Naive thymus-derived CD4-positive, alpha-beta T cell (primary cell): ENCODE measurements at regions of chr1 and their contacts with region 1.

Region 1: DNA sequence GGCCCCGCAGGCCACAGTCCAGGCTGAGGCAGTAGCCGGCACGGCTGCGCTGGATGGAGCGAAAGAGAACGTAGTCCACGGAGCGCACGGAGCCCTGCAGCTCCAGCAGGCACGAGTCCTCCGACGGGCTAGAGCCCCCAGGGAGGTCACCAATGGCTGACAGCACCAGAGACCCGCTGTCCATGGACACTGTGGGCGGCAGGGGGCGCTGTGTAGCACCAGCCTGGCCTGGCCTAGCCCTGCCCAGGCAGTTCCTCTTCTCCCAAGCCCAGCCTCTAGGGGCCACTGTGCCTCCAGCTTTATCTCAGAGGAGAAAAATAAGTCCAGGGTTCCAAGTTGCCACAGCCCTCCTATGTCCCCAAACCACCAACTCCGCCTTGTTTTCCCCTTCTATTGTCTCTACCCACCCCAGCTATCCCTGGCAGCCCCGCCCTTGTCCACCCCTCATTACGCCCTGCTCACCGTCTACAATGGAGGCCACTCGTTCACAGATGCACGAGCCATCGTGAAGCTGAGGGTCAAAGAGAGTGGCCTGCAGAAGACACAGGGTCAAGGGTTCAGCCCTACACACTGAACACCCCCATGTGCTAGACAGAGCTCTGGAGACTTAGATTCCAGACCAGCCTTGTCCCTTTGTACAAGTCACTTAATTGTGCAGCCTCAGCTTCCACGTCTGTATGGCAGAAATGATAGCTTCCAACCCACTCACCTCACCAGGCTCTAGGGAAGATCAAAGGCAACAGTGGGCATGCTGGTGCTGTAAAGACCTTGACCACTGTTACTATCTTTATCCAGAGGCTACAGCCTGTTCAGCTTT is 4.4 kb downstream of the ENTREP3 start:
- DNase-seq: peak; percentile 86 to 98 (median 93)
- ATAC-seq: peak; percentile 99
- H3K4me3 ChIP-seq: peak overlapping the region; percentile 54
- H3K4me3 Mint-ChIP-seq: peak overlapping the region in 9 of 10 donors; percentile 45 to 83 (median 62)
- H3K27ac ChIP-seq: peak overlapping the region; percentile 49
- H3K27ac Mint-ChIP-seq: peak overlapping the region in 7 of 9 donors; percentile 29 to 86 (median 69)
- H3K4me1 ChIP-seq: peaks cover 4 to 10% of the 10 kb centered on the region in 2 donors
- H3K4me1 Mint-ChIP-seq: peaks cover 21 to 36% (median 24%) of the 10 kb centered on the region in 7 donors
- H3K27me3 ChIP-seq: no peaks in the 10 kb centered on the region
- H3K27me3 Mint-ChIP-seq: no peaks in the 10 kb centered on the region

Region 2: GRCh38 chr1:155208541-155209311 is 42.1 kb before region 1 on chr1 and contains the start of gene MTX1:
- CTCF ChIA-PET with region 1: interaction called, 5 read pairs
- POLR2A ChIA-PET with region 1: interaction called, 5 read pairs
- intact Hi-C with region 1: loop called in 1 of 2 experiments (anchors 5 kb)
- DNase-seq: peak; percentile 83 to 91 (median 88)
- ATAC-seq: peak; percentile 89
- H3K4me3 ChIP-seq: peak within 1 kb of the TSS; percentile 100
- H3K4me3 Mint-ChIP-seq: peak within 1 kb of the TSS; percentile 81 to 92 (median 88)
- H3K27ac ChIP-seq: peak within 1 kb of the TSS; percentile 100
- H3K27ac Mint-ChIP-seq: peak within 1 kb of the TSS; percentile 92 to 99 (median 96)
- H3K4me1 ChIP-seq: peaks cover 20 to 21% of the 10 kb centered on the region in 2 donors
- H3K4me1 Mint-ChIP-seq: peaks cover 19 to 30% (median 24%) of the 10 kb centered on the region in 7 donors
- H3K27me3 ChIP-seq: no peaks in the 10 kb centered on the region
- H3K27me3 Mint-ChIP-seq: no peaks in the 10 kb centered on the region
- total RNA-seq, gene MTX1: 19.5 to 40.8 (median 22.0) TPM

Region 3: DNA sequence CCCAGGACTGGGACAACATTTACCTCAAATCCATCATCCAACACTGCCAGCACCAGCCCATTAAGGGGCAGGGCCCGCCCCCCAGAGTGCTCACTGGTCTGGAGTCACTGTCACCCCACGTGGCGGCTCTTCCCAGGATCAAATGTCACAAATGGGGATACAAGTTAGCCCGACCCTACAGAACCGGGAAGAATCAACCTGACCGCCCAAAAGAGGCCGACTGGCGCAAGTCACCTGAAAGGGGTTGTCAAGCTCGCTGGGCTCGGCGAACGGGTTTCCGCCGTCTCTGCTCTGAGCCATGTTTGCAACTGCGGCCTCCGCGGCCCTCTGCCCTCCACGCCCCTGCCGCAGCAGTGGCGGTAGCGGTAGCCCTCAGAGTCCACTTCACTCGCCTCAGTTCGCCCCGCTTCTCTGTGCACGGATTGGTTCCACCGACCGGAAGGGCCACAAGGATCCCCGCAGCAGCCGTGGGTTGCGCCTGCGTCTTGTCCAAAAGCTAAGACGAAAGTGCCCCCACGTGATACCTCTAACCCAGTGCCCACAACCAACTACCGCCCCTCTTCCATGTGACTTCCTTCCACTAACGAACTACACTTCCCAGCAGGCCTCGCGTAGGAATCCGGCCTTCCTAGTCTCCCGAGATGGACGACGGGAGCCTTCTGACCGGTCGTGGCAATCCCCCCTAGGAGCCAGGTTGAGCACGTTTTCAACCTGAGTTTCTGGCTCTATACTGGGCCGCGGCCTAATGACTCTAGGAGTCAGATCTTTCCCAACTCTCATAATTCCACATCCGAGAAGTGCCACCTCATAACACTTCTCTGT is 11.2 kb after region 1 on chr1 and contains the start of gene SCAMP3:
- CTCF ChIA-PET with region 1: interaction called, 42 read pairs
- POLR2A ChIA-PET with region 1: interaction called, 34 read pairs
- intact Hi-C with region 1: no loop called
- DNase-seq: peak; percentile 52 to 89 (median 79)
- ATAC-seq: peak; percentile 99
- H3K4me3 ChIP-seq: peak within 1 kb of the TSS; percentile 88
- H3K4me3 Mint-ChIP-seq: peak within 1 kb of the TSS; percentile 81 to 100 (median 98)
- H3K27ac ChIP-seq: peak within 1 kb of the TSS; percentile 87
- H3K27ac Mint-ChIP-seq: peak within 1 kb of the TSS; percentile 89 to 98 (median 96)
- H3K4me1 ChIP-seq: peaks cover 18 to 19% of the 10 kb centered on the region in 2 donors
- H3K4me1 Mint-ChIP-seq: peaks cover 22 to 42% (median 33%) of the 10 kb centered on the region in 7 donors
- H3K27me3 ChIP-seq: no peaks in the 10 kb centered on the region
- H3K27me3 Mint-ChIP-seq: no peaks in the 10 kb centered on the region
- total RNA-seq, gene SCAMP3: 50.8 to 118 (median 100) TPM

Region 4: GRCh38 chr1:155308493-155309422 is 57.9 kb after region 1 on chr1 and contains the start of gene FDPS:
- CTCF ChIA-PET with region 1: interaction called, 10 read pairs
- POLR2A ChIA-PET with region 1: interaction called, 3 read pairs
- intact Hi-C with region 1: loop called (anchors 1 kb)
- DNase-seq: peak; percentile 83 to 98 (median 95)
- ATAC-seq: peak; percentile 98
- H3K4me3 ChIP-seq: peak within 1 kb of the TSS; percentile 90
- H3K4me3 Mint-ChIP-seq: peak within 1 kb of the TSS; percentile 88 to 99 (median 97)
- H3K27ac ChIP-seq: peak within 1 kb of the TSS; percentile 87
- H3K27ac Mint-ChIP-seq: peak within 1 kb of the TSS; percentile 89 to 98 (median 96)
- H3K4me1 ChIP-seq: peaks cover 11 to 20% of the 10 kb centered on the region in 2 donors
- H3K4me1 Mint-ChIP-seq: peaks cover 12 to 43% (median 27%) of the 10 kb centered on the region in 7 donors
- H3K27me3 ChIP-seq: no peaks in the 10 kb centered on the region
- H3K27me3 Mint-ChIP-seq: no peaks in the 10 kb centered on the region
- total RNA-seq, gene FDPS: 58.5 to 193 (median 79.0) TPM

Region 5: GRCh38 chr1:155504207-155504606 is 253.4 kb after region 1 on chr1:
- CTCF ChIA-PET with region 1: interaction called, 5 read pairs
- POLR2A ChIA-PET with region 1: no interaction called
- intact Hi-C with region 1: loop called (anchors 2 to 10 kb)
- DNase-seq: peak in 2 of 9 donors; percentile 5 to 30
- ATAC-seq: peak; percentile 71
- H3K4me3 ChIP-seq: no peak overlapping the region
- H3K4me3 Mint-ChIP-seq: no peak overlapping the region
- H3K27ac ChIP-seq: no peak overlapping the region
- H3K27ac Mint-ChIP-seq: peak overlapping the region in 3 of 9 donors; percentile 10 to 32 (median 14)
- H3K4me1 ChIP-seq: peaks cover 0 to 18% of the 10 kb centered on the region in 2 donors
- H3K4me1 Mint-ChIP-seq: peaks cover 31 to 61% (median 50%) of the 10 kb centered on the region in 7 donors
- H3K27me3 ChIP-seq: no peaks in the 10 kb centered on the region
- H3K27me3 Mint-ChIP-seq: no peaks in the 10 kb centered on the region

Region 6: DNA sequence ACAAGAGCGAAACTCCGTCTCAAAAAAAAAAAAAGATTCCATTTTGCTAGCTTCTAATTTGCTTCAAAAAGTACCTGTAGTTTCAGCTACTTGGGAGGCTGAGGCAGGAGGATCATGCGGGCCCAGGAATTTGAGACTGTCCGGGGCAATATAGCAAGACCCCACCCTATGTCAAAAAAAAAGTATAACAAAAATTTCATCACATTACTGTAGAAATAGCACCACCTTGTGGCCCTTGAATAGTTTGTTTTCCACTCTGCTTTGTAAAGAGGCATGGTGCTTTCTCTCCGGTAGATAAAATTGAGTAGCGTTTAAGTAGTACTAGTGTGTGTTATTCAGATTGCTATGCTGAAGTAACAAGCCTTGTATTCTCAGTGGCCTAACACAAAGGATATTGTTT is 340.9 kb after region 1 on chr1:
- CTCF ChIA-PET with region 1: interaction called, 12 read pairs
- POLR2A ChIA-PET with region 1: no interaction called
- intact Hi-C with region 1: loop called in 1 of 2 experiments (anchors 1 kb)
- DNase-seq: peak in 7 of 9 donors; percentile 42 to 71 (median 57)
- ATAC-seq: peak; percentile 85
- H3K4me3 ChIP-seq: no peak overlapping the region
- H3K4me3 Mint-ChIP-seq: no peak overlapping the region
- H3K27ac ChIP-seq: no peak overlapping the region
- H3K27ac Mint-ChIP-seq: peak overlapping the region in 1 of 9 donors; percentile 62
- H3K4me1 ChIP-seq: no peaks in the 10 kb centered on the region
- H3K4me1 Mint-ChIP-seq: peaks cover 0 to 4% (median 3%) of the 10 kb centered on the region in 7 donors
- H3K27me3 ChIP-seq: no peaks in the 10 kb centered on the region
- H3K27me3 Mint-ChIP-seq: no peaks in the 10 kb centered on the region

Region 7: GRCh38 chr1:155729031-155729898 is 478.4 kb after region 1 on chr1:
- CTCF ChIA-PET with region 1: interaction called, 4 read pairs
- POLR2A ChIA-PET with region 1: no interaction called
- intact Hi-C with region 1: loop called in 1 of 2 experiments (anchors 1 kb)
- DNase-seq: peak in 6 of 9 donors; percentile 7 to 43 (median 28)
- ATAC-seq: peak; percentile 57
- H3K4me3 ChIP-seq: no peak overlapping the region
- H3K4me3 Mint-ChIP-seq: no peak overlapping the region
- H3K27ac ChIP-seq: no peak overlapping the region
- H3K27ac Mint-ChIP-seq: peak overlapping the region in 5 of 9 donors; percentile 10 to 67 (median 29)
- H3K4me1 ChIP-seq: no peaks in the 10 kb centered on the region
- H3K4me1 Mint-ChIP-seq: peaks cover 0 to 7% (median 0%) of the 10 kb centered on the region in 7 donors
- H3K27me3 ChIP-seq: no peaks in the 10 kb centered on the region
- H3K27me3 Mint-ChIP-seq: no peaks in the 10 kb centered on the region